ENCODE measurements at regions of chrX and their contacts with region 1.

Region 1: DNA sequence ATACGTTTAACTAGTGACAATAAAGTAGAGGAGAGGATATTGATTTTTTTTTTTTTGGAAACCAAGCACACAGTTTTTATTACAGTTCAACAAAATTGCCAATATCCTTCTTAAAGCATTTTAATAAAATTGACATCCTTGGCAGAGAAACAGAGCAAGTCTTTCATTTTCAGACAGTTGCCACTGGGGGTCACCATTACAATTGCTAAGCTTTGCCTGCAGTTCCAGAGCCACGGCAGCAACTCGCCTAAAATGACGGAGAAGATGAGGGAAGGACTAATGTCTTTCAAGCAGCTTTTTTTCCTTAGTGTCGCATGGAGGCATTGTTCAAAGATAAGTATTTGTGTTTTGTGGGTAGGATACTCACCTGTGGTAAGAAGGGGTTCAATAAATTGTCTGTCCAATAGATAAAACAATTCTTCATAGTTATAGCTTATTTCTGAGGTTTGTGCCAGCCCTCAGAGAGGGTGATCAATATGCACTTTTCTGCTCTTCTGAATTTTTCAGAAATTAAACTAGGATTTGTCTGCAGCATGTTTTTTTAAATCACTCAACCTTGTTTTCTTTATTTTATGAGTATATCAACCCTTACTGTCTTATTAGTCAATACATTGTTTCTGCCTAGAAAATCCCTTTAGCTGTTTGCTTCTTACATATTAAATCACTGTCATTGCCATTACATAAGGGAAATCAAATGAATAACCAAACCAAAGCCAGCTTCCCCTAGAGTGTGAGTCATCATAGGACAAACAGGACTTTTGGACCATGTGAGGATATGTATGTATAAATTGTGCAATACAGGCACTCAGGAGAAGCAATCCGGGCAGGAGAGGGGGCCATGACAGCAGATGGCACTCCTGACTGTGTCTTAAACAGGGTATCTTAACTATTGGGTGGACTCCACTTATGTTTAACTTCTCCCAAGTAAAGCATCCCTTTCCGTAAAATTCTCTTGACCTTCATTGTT is 508.1 kb upstream of the ARX start:
- DNase-seq: peak; percentile 68
- H3K4me3 Mint-ChIP-seq: peak overlapping the region; percentile 33
- H3K27ac Mint-ChIP-seq: no peak overlapping the region
- H3K4me1 Mint-ChIP-seq: peaks cover 13% of the 10 kb centered on the region
- H3K27me3 Mint-ChIP-seq: no peaks in the 10 kb centered on the region
- CTCF ChIP-seq: peak; percentile 29

Region 2: DNA sequence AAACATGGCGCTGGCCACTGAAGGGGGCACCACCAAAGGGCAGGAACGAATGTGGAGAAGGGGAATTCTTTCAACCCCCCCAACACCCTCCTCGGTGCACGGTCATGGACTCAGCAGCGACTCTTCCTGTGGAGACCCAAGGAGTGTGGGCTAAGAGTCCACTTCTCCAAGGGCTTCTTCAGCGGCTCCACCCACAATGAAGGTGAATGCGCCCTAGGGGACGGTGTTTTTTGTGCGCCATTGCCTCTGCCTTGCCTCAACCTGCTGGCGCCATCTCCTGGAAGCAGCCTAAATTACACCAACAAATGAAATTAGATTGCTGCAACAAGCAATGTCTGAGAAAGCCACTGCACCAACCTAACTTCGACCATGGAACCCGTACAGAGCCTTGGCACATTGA is 445.1 kb after region 1 on chrX:
- CTCF ChIA-PET with region 1: interaction called, 4 read pairs
- POLR2A ChIA-PET with region 1: no interaction called
- intact Hi-C with region 1: loop called (anchors 5 kb)
- DNase-seq: peak; percentile 35
- H3K4me3 Mint-ChIP-seq: no peak overlapping the region
- H3K27ac Mint-ChIP-seq: no peak overlapping the region
- H3K4me1 Mint-ChIP-seq: no peaks in the 10 kb centered on the region
- H3K27me3 Mint-ChIP-seq: no peaks in the 10 kb centered on the region
- CTCF ChIP-seq: peak; percentile 39

Measured in MCF 10A (cell line).